Aorta (tissue), 5 donors: ENCODE measurements at regions of chrX and their contacts with region 1.

Region 1: GRCh38 chrX:3651276-3651675 is 62.2 kb downstream of the PRKX start:
- DNase-seq: no peak
- ATAC-seq: no peak
- H3K4me3 ChIP-seq: no peak overlapping the region
- H3K27ac ChIP-seq: no peak overlapping the region
- H3K4me1 ChIP-seq: no peaks in the 10 kb centered on the region
- H3K27me3 ChIP-seq: no peaks in the 10 kb centered on the region

Region 2: GRCh38 chrX:3227533-3227932 is 423.7 kb before region 1 on chrX:
- intact Hi-C with region 1: no loop called
- DNase-seq: no peak
- ATAC-seq: no peak
- H3K4me3 ChIP-seq: no peak overlapping the region
- H3K27ac ChIP-seq: no peak overlapping the region
- H3K4me1 ChIP-seq: no peaks in the 10 kb centered on the region
- H3K27me3 ChIP-seq: peaks cover 0 to 2% of the 10 kb centered on the region in 2 donors

Region 3: DNA sequence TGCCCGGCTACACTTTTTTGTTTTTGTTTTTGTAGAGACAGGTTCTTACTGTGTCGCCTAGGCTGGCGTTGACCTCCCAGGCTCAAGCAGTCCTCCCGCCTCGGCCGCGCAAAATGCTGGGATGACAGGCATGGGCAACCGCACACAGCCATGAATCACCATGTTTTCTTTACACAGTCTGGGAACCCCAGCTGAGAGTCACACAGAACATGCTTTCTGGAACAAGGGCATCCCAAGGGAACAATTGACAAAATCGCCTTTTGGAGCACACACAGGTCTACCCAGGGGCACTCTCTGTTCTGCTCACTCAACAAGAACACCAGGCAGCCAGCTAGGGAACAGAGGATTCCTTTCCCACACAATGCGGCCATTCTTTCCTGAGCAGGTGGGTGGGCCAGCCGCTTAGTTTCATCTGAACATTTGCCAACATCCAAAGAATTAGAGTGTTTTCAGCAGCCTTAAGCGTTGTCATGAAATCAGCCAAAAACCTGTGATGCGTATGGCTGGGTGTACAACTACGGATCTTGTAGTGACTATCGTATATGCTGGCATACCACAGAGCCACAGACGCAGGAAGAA is 46.5 kb after region 1 on chrX:
- intact Hi-C with region 1: no loop called
- DNase-seq: peak; percentile 55 to 82
- ATAC-seq: peak; percentile 75
- H3K4me3 ChIP-seq: no peak overlapping the region
- H3K27ac ChIP-seq: no peak overlapping the region
- H3K4me1 ChIP-seq: no peaks in the 10 kb centered on the region
- H3K27me3 ChIP-seq: no peaks in the 10 kb centered on the region

Region 4: GRCh38 chrX:3788509-3789233 is 137.4 kb after region 1 on chrX:
- intact Hi-C with region 1: loop called in 1 of 2 experiments (anchors 10 kb)
- DNase-seq: no peak
- ATAC-seq: no peak
- H3K4me3 ChIP-seq: no peak overlapping the region
- H3K27ac ChIP-seq: no peak overlapping the region
- H3K4me1 ChIP-seq: no peaks in the 10 kb centered on the region
- H3K27me3 ChIP-seq: no peaks in the 10 kb centered on the region

Region 5: DNA sequence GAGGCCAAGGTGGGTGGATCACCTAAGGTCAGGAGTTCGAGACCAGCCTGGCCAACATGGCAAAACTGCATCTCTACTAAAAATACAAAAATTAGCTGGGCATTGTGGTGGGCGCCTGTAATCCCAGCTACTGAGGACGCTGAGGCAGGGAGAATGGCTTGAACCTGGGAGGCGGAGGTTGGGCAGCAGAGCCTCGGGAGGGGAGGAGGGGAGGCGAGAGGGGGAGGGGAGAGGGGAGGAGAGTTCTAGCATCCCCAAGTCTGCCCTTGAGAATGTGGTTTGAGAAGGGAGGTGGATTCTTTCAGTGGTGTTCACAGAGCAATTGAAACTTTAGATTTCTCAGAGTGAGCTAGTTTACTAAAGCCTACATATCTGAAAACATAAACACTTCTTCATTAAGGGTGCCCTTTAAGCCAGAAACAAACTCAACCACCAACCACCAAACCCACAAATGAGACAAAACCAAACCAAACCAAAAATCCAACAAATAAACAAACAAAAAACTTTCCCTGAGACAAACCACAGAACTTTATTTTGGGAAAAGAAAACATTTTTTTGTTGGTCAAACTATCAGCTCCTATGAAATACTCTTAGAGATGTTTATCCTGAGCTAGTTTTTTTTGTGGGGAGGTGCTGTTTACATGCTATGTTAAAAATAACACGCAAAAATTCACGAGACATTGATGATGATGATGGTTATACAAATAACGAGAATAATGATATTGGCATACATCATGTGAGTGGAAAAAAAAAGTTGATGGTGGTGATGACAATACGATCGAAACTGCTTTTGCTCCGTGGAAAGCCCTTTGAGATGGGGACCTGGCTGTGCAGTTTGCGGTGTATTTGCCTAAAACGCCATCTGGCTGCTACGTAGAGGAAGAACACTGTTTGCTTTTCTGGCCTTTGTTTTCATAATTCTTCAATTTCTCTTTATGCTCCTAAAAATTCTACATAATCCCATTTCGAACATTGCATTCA is 160.3 kb after region 1 on chrX:
- intact Hi-C with region 1: loop called in 1 of 2 experiments (anchors 2 kb)
- DNase-seq: no peak
- ATAC-seq: no peak
- H3K4me3 ChIP-seq: no peak overlapping the region
- H3K27ac ChIP-seq: no peak overlapping the region
- H3K4me1 ChIP-seq: no peaks in the 10 kb centered on the region
- H3K27me3 ChIP-seq: no peaks in the 10 kb centered on the region